Right ventricle myocardium inferior (tissue), 1 donor: ENCODE measurements at regions of chrX and their contacts with region 1.

Region 1: GRCh38 chrX:130975947-130976346 is 72.9 kb upstream of the ENOX2 start:
- DNase-seq: no peak
- ATAC-seq: no peak

Region 2: DNA sequence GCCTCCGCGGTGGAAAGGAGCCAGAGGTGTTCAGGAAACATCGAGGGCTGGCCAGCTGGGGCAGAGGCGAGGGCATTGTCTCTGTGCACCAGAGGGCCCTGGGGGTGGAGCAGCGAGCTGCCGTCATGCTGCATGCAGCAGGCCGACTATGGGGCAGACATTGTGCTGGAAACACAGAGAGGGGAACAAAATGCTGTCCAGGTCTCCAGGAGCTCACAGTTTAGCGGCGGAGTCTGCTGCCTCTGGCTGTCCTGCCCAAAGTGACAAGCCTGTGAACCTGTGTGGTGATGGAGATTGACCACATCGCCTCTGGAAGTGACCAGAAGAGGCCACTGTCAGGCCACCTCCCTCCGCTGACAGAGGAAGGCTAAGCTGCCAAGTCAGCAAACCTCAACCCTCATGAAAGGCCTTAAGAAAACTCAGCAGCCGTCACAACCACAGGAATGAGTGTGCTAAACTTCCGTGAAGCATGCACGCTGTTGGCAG is 1216.3 kb before region 1 on chrX:
- intact Hi-C with region 1: no loop called
- DNase-seq: peak; percentile 73
- ATAC-seq: peak; percentile 76

Region 3: GRCh38 chrX:130669233-130669632 is 306.7 kb before region 1 on chrX:
- intact Hi-C with region 1: no loop called
- DNase-seq: no peak
- ATAC-seq: no peak

Region 4: DNA sequence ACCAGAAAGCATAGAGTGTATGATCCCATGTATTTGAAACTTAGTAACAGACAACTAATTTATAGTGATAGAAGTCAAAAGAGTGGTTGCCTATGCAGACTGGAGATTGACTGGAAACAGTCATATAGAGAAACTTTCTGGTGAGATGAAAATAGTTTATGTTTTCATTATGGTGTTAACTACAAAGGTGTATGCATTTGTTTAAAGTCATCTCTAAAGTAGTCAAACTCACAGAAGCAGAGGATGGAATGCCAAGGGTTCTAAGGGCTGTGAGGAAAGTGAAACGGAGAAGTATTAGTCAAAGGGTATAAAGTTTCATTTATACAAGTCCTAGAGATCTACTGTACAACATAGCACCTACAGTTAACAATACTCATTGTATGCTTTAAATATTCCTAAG is 118.7 kb before region 1 on chrX:
- intact Hi-C with region 1: no loop called
- DNase-seq: no peak
- ATAC-seq: no peak

Region 5: DNA sequence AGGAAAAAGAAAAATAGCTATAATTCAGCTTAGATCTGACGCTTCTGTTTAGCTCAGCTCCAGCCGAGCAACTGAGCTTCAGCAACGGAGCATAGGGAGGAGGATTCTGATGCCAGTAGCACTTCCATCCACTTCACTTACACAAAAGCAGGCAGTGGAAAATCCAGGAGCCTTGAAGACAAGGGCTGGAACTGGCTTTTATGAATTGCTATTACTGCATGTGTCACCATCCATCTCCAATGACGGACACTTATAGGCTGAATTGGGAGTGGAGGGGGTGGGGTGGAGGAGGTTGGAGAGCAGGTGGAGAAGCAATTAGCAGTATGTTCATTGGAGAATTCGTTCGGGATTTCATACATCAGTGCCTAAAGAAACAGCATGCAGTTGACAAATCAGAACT is 88.6 kb before region 1 on chrX:
- intact Hi-C with region 1: no loop called
- DNase-seq: no peak
- ATAC-seq: no peak

Region 6: DNA sequence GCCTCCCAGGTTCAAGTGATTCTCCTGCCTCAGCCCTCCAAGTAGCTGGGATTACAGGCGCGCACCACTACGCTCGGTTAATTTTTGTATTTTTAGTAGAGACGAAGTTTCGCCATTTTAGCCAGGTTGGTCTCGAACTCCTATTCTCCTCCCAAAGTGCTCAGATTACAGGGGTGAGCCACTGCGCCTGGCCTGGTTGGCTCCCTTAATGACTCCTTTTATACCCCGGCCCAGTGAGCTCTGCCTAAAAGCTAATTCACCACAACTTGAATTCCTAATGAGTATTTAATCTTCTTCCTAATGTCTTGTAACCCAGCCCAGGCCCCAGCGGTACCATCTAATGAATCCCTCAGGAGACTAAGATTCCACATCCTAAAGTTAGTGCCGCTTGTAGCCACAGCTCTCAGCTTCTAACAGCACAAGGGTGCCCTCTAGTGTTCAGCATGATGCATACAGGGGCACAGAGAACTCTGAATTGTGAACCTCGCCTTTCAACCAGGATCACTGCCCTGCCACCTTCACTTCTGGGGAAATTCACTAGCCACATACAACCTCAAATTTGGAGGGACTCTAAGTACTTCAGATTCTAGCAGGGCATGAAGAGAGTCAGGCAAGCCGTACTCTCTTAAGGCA is 657.5 kb after region 1 on chrX:
- intact Hi-C with region 1: loop called (anchors 2 kb)
- DNase-seq: no peak
- ATAC-seq: peak; percentile 34